ENCODE measurements at regions of chr11 and their contacts with region 1.

Region 1: DNA sequence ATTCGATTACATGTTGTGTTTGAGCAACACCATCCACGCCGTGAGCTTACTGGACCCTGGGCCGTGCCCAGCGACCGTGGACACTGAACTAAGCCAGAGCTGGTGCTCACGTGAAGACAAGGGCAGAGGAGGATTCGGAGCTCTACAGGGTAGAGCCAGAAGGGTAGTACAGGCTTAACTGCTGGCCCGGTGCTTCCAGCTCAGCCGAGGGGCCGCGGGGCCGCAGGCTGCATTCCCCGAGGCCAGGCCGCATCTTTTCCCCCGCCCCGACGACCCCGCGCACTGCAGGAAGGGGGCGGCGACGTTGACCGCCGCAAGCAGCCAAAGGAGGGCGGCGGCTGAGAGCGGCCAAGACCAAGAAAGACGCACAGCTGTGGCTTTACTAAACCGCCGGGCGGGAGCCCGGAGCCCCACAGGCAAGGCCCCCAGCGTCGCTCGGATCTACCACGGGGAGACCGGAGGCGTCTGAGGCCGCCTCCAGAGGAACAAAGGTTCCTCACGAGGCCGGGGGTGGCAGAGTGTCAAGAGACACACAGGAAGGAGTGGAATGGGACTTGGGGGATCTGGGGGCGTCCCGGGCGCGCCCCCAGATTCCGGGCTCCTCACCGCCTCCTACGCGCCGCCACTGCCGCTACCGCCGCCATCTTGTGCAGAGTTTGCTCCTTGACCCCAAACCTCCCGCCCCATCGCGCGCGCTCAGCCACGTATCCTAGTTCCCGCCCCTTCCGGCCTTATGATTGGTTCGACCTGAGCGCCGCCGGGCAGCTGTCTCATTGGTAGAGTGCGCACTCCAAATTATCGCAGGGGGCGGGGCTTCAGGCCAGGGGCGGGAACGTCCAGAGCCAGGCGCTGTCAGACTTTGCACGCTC is at the start of gene GANAB:
- DNase-seq: peak; percentile 100
- ATAC-seq: peak; percentile 99
- H3K4me3 Mint-ChIP-seq: peak within 1 kb of the TSS; percentile 93
- H3K27ac Mint-ChIP-seq: peak within 1 kb of the TSS; percentile 93
- H3K4me1 Mint-ChIP-seq: peaks cover 34% of the 10 kb centered on the region
- H3K27me3 Mint-ChIP-seq: no peaks in the 10 kb centered on the region
- total RNA-seq, gene GANAB: 208 to 218 TPM

Region 2: DNA sequence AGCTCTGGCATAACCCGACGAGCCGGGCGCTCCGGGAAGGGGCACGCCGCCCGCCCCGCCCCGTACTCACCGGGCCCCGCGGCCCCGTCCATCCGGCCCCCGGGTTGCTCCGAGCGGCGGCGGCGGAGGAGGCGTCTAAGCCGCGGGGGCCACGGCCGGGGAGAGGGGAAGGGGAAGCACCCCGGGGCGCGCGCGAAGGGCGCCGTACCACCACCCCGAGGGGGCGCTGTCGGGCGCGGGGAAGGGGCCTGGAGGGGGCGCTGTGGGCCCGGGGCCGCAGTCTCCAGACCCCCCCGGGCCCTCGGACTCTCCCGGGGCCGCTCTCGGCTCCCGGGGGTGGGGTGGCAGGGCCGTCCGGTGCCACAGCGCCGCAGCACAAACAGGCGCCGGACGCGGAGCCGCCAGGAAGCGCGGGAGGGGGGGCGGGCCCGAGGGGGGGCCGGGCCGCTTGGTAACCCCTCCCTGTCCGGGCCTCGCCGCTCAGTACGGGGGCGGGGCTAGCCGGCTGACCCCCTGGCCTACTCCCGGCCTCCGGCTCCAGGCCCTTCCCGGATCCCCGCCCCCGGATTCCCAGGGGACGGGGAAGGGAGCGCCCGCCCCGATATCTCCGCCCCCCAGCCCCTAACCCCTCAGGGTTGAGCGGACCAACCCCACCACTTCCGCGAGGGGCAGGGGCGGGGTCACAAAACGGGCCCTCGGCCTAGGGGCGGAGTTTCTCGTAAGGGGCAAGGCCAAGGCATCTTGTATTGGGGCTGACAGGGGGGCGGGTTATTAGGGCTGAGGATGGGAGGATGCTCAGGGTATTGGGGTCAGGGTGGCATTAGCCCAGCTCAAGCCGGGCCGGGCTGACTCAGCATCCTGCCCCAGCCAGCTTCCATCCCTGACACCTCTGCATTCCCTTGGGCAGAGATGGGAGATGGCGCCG is 33.6 kb before region 1 on chr11 and contains the starts of genes EML3 and ROM1:
- CTCF ChIA-PET with region 1: interaction called, 5 read pairs
- POLR2A ChIA-PET with region 1: no interaction called
- intact Hi-C with region 1: loop called (anchors 1 to 2 kb)
- DNase-seq: peak; percentile 91
- ATAC-seq: peak; percentile 78
- H3K4me3 Mint-ChIP-seq: peak within 1 kb of the TSS; percentile 91
- H3K27ac Mint-ChIP-seq: peak within 1 kb of the TSS; percentile 90
- H3K4me1 Mint-ChIP-seq: peaks cover 37% of the 10 kb centered on the region
- H3K27me3 Mint-ChIP-seq: no peaks in the 10 kb centered on the region
- total RNA-seq, gene EML3: 101 to 112 TPM
- total RNA-seq, gene ROM1: 1.5 to 1.9 TPM

Region 3: DNA sequence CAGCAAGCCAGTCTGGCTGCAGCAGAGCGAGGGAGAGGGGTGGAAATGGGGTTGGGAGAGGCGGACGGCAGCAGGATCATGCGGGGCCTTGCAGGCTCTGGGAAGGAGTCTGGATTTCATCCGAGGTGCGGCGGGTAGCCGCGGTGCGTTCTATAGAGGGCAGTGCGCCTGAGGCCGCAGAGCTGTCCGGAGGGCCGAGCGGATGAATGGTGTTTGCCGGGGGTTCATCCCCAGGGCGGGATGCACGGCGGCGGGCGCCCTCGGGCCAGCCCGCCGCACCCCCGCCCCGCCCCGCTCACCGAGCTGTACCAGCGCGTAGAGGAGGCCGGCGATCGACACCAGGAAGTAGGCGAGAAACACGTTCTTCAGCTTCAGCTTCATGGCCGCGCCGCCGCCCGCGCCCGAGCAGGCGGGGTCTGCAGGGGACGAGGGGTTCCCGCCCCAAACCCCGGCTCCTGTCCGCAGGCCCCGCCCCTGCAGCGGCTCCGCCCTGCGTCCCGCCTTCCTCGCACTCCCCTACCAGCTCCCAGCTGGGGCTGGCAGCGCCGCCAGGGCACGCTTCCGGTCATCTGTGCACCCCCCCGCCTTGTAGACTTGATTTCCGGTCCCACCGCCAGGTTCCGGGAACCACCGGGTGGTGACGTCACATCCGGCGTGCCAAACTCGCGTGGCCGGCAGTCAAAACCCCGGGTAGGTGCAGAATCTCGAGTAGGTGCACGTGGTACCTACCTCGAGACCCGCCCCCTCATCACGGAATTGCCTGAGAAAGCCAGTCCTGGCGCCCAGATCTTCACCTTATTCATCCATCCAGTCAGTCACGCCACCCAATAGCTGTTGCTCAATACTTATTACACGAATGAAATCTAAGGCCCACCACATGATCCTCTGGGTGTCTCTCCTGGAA is 24.4 kb before region 1 on chr11 and contains the start of gene B3GAT3:
- CTCF ChIA-PET with region 1: interaction called, 9 read pairs
- POLR2A ChIA-PET with region 1: interaction called, 9 read pairs
- intact Hi-C with region 1: loop called in 1 of 2 experiments (anchors 1 kb)
- DNase-seq: peak; percentile 97
- ATAC-seq: peak; percentile 94
- H3K4me3 Mint-ChIP-seq: peak within 1 kb of the TSS; percentile 92
- H3K27ac Mint-ChIP-seq: peak within 1 kb of the TSS; percentile 94
- H3K4me1 Mint-ChIP-seq: peaks cover 29% of the 10 kb centered on the region
- H3K27me3 Mint-ChIP-seq: no peaks in the 10 kb centered on the region
- total RNA-seq, gene B3GAT3: 48.7 to 57.5 TPM

Region 4: GRCh38 chr11:62671575-62672389 is 25.6 kb after region 1 on chr11 and contains the starts of genes LBHD1 and UQCC3:
- CTCF ChIA-PET with region 1: no interaction called
- POLR2A ChIA-PET with region 1: interaction called, 8 read pairs
- intact Hi-C with region 1: loop called in 1 of 2 experiments (anchors 1 kb)
- DNase-seq: peak; percentile 86
- ATAC-seq: peak; percentile 88
- H3K4me3 Mint-ChIP-seq: peak within 1 kb of the TSS; percentile 91
- H3K27ac Mint-ChIP-seq: peak within 1 kb of the TSS; percentile 96
- H3K4me1 Mint-ChIP-seq: peaks cover 54% of the 10 kb centered on the region
- H3K27me3 Mint-ChIP-seq: no peaks in the 10 kb centered on the region
- total RNA-seq, gene LBHD1: 11.9 to 15.5 TPM
- total RNA-seq, gene UQCC3: 4.1 to 6.4 TPM

Region 5: DNA sequence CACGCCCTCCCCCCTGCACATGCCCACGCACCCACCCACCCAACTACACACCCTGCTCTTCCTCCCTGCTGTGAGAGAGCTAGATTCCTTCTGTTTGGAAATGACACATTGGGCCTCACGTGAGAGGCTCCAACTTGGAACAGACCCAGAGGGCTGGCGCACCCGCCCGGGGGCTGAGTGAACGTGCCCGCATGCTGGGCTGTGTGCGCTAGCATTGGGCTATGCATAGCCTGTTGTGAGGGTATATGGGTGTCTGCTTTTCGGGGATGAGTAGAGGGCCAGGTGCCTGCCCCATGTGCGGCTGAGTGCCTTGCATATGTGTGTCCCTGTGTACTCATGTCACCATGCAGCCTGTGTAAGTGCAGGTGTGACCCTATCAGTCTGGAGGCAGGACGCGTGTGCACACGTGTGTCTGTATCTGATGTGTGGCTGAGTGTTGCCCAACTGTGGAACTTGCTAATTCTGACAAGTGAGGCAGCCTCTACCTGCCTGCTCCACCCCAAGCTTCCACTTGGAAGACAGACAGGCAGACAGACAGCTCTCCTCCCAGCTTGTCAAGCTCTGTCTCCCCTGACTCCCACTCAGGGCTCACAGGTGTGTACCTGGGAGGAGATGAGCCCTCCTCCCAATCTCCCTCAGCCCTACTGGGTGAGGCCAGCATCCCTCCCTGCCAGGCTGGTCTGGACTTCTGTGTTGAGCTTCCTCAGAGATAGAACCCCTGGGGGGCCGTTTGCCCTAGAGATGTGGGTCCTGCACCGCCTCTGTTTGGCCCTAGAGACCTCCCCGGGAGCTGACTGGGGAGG is 275.8 kb after region 1 on chr11:
- CTCF ChIA-PET with region 1: no interaction called
- POLR2A ChIA-PET with region 1: no interaction called
- intact Hi-C with region 1: no loop called
- DNase-seq: peak; percentile 15
- ATAC-seq: no peak
- H3K4me3 Mint-ChIP-seq: no peak overlapping the region
- H3K27ac Mint-ChIP-seq: peak overlapping the region; percentile 7
- H3K4me1 Mint-ChIP-seq: peaks cover 32% of the 10 kb centered on the region
- H3K27me3 Mint-ChIP-seq: peaks cover 50% of the 10 kb centered on the region

Measured in activated CD4-positive, alpha-beta T cell treated with anti-CD3 and anti-CD28 coated beads for 36 hours (primary cell).